HCT116 (cell line): ENCODE measurements at regions of chr7 and their contacts with region 1.

Region 1: DNA sequence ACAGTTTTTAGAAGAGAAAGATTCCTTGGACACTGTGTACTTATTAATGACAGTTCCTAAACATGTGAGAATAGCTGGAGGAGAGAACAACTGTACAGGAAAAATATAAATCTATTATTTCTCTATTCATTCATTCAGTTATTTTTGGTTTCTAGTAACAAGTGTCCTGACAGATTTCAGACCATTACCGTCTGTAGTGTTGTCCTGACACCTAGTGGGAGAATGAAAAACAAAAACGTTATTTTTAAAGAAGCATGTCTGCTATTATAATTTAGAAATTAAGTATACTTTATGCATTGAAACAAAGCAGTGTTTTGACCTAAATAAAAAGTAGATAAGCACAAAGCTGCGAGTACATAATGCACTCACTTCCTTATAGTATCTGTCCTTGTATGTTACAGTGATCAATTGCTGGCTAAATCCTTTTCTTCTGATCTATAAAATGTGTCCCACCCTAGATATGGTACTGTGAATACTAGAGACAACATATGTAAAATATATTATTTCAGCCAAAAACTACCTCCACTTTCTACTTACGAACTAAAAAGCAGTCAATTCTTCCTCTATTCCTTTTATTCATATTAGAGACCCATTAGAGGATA is 575.6 kb downstream of the ARL4A start:
- DNase-seq: peak; percentile 26
- ATAC-seq: peak; percentile 71; the same call in 1 of the 2 replicates
- H3K4me3 ChIP-seq: no peak overlapping the region
- H3K27ac ChIP-seq: no peak overlapping the region
- H3K4me1 ChIP-seq: no peaks in the 10 kb centered on the region
- H3K27me3 ChIP-seq: no peaks in the 10 kb centered on the region
- CTCF ChIP-seq: peak; percentile 46 to 90 (median 71)
- POLR2A ChIP-seq: no peak
- RAD21 ChIP-seq: peak; percentile 91

Region 2: GRCh38 chr7:11831736-11832495 is 1431.1 kb before region 1 on chr7 and contains the start of gene THSD7A:
- CTCF ChIA-PET with region 1: no interaction called
- POLR2A ChIA-PET with region 1: no interaction called
- RAD21 ChIA-PET with region 1: no interaction called
- intact Hi-C with region 1: loop called (anchors 10 kb)
- DNase-seq: no peak
- ATAC-seq: peak; percentile 90
- H3K4me3 ChIP-seq: peak within 1 kb of the TSS; percentile 50 to 71
- H3K27ac ChIP-seq: no peak within 1 kb of the TSS
- H3K4me1 ChIP-seq: peaks cover 0 to 15% of the 10 kb centered on the region in 2 experiments; a peak in 1 of 4 replicates
- H3K27me3 ChIP-seq: no peaks in the 10 kb centered on the region
- CTCF ChIP-seq: peak in 1 of 3 experiments; percentile 13; a peak in 1 of 6 replicates
- POLR2A ChIP-seq: no peak
- RAD21 ChIP-seq: peak; percentile 19
- total RNA-seq, gene THSD7A: 0.05 TPM

Region 3: DNA sequence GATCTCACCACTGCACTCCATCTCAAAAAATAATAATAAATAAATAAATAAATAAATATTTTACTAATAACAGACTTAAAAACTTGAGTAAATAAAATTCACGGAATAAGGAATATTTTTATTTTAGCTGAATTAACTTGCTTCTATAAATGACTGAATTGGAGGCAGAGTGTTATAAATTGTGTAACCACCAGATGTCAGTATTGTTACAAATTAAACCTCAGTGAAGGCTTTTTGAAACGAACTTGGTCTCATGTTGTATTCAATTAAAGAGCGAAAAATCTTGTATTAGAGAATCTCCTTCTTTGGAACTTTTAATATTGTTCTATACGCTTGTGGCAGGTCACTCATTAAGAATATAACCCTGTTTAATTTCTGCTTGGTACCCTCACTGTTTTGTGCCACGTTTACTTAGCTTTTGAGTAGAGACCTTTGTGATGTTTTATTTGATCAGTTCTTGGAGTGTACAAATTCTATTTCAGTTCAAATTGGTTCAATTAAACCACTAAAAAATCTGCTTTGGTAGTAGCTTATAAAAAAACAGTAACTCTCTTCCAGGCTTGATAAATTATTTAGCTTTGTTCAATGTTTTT is 738.1 kb before region 1 on chr7:
- CTCF ChIA-PET with region 1: interaction called, 7 read pairs
- POLR2A ChIA-PET with region 1: no interaction called
- RAD21 ChIA-PET with region 1: interaction called in 1 of 2 experiments, 3 read pairs
- intact Hi-C with region 1: loop called (anchors 1 kb)
- DNase-seq: peak; percentile 60
- ATAC-seq: peak; percentile 61
- H3K4me3 ChIP-seq: no peak overlapping the region
- H3K27ac ChIP-seq: no peak overlapping the region
- H3K4me1 ChIP-seq: peaks cover 0 to 4% of the 10 kb centered on the region in 2 experiments; a peak in 1 of 4 replicates
- H3K27me3 ChIP-seq: no peaks in the 10 kb centered on the region
- CTCF ChIP-seq: peak; percentile 38 to 73 (median 63); a peak in 5 of 6 replicates
- POLR2A ChIP-seq: no peak
- RAD21 ChIP-seq: peak; percentile 81

Region 4: GRCh38 chr7:12638851-12639467 is 624.1 kb before region 1 on chr7:
- CTCF ChIA-PET with region 1: interaction called, 4 read pairs
- POLR2A ChIA-PET with region 1: no interaction called
- RAD21 ChIA-PET with region 1: no interaction called
- intact Hi-C with region 1: loop called (anchors 1 kb)
- DNase-seq: peak; percentile 36
- ATAC-seq: peak; percentile 70
- H3K4me3 ChIP-seq: no peak overlapping the region
- H3K27ac ChIP-seq: no peak overlapping the region
- H3K4me1 ChIP-seq: peaks cover 0 to 7% of the 10 kb centered on the region in 2 experiments; a peak in 2 of 4 replicates
- H3K27me3 ChIP-seq: no peaks in the 10 kb centered on the region
- CTCF ChIP-seq: peak; percentile 33 to 70 (median 66); a peak in 5 of 6 replicates
- POLR2A ChIP-seq: no peak
- RAD21 ChIP-seq: peak; percentile 81

Region 5: DNA sequence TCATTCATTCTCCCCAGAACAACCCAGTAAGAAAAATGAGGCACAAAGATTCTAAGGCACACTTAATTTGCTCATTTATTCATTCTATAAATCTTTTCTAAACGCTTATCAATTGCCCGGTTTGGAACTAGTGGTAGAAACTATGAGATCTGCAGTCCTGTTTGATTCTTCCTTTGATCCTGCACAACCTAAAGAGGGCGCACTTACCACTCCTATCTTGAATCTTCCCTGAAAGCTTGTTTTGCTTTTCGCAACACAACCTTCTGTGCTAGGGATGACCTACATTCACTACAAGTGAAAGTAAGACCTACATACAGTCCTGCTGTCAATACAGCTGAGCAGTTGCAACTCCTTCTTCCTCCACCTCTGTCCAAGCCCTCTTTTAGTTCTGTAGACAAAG is 588.2 kb before region 1 on chr7:
- CTCF ChIA-PET with region 1: interaction called, 3 read pairs
- POLR2A ChIA-PET with region 1: no interaction called
- RAD21 ChIA-PET with region 1: no interaction called
- intact Hi-C with region 1: loop called (anchors 2 kb)
- DNase-seq: no peak
- ATAC-seq: peak; percentile 69
- H3K4me3 ChIP-seq: no peak overlapping the region
- H3K27ac ChIP-seq: no peak overlapping the region
- H3K4me1 ChIP-seq: peaks cover 0 to 5% of the 10 kb centered on the region in 2 experiments; a peak in 1 of 4 replicates
- H3K27me3 ChIP-seq: no peaks in the 10 kb centered on the region
- CTCF ChIP-seq: peak; percentile 34 to 64 (median 50); a peak in 5 of 6 replicates
- POLR2A ChIP-seq: no peak
- RAD21 ChIP-seq: peak; percentile 64